K562 (cell line): ENCODE measurements at regions of chr2 and their contacts with region 1.

Region 1: GRCh38 chr2:206890926-206891325 is 48.4 kb upstream of the CPO start:
- DNase-seq: no peak
- ATAC-seq: no peak
- H3K4me3 ChIP-seq: no peak overlapping the region
- H3K27ac ChIP-seq: no peak overlapping the region
- H3K4me1 ChIP-seq: no peaks in the 10 kb centered on the region
- H3K27me3 ChIP-seq: no peaks in the 10 kb centered on the region
- CTCF ChIP-seq: no peak
- EP300 ChIP-seq: no peak
- POLR2A ChIP-seq: no peak
- RAD21 ChIP-seq: no peak

Region 2: GRCh38 chr2:206095536-206096332 is 795.2 kb before region 1 on chr2:
- CTCF ChIA-PET with region 1: no interaction called
- POLR2A ChIA-PET with region 1: no interaction called
- in situ Hi-C with region 1: no loop called
- intact Hi-C with region 1: no loop called
- DNase-seq: no peak
- ATAC-seq: no peak
- H3K4me3 ChIP-seq: no peak overlapping the region
- H3K27ac ChIP-seq: no peak overlapping the region
- H3K4me1 ChIP-seq: no peaks in the 10 kb centered on the region
- H3K27me3 ChIP-seq: no peaks in the 10 kb centered on the region
- CTCF ChIP-seq: no peak
- EP300 ChIP-seq: no peak
- POLR2A ChIP-seq: no peak
- RAD21 ChIP-seq: no peak

Region 3: DNA sequence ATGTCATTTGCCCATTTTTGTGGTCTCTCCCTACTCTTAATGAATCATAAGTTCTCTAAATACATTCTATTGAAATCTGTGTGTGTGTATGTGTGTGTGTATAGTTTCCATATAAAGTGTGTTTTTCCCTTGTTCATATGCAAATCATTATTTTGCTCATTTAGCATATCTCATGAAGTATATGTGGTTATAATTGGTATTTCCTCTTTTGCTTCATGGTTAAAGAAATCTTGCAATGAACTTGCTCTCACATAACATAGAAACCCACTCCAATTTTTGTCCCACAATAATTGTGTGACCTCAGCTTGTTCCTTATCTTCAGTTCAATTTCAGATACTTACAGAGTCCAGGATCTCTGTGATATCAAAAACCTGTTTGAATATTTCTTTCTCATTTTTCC is 49.6 kb after region 1 on chr2:
- CTCF ChIA-PET with region 1: no interaction called
- POLR2A ChIA-PET with region 1: no interaction called
- in situ Hi-C with region 1: loop called (anchors 10 kb)
- intact Hi-C with region 1: no loop called
- DNase-seq: no peak
- ATAC-seq: no peak
- H3K4me3 ChIP-seq: no peak overlapping the region
- H3K27ac ChIP-seq: no peak overlapping the region
- H3K4me1 ChIP-seq: no peaks in the 10 kb centered on the region
- H3K27me3 ChIP-seq: no peaks in the 10 kb centered on the region
- CTCF ChIP-seq: no peak
- EP300 ChIP-seq: no peak
- POLR2A ChIP-seq: no peak
- RAD21 ChIP-seq: no peak